HEK293 (cell line): ENCODE measurements at regions of chr17 and their contacts with region 1.

Region 1: GRCh38 chr17:10646392-10646990 is 10.6 kb downstream of the MYH3 start:
- H3K4me3 ChIP-seq: no peak overlapping the region
- H3K27ac ChIP-seq: no peak overlapping the region
- H3K4me1 ChIP-seq: no peaks in the 10 kb centered on the region
- CTCF ChIP-seq: 0 out of 2 replicates have a peak, but pooled peaks have one; percentile 41

Region 2: GRCh38 chr17:10574324-10574723 is 72.2 kb before region 1 on chr17:
- CTCF ChIA-PET with region 1: no interaction called
- POLR2A ChIA-PET with region 1: no interaction called
- H3K4me3 ChIP-seq: no peak overlapping the region
- H3K27ac ChIP-seq: no peak overlapping the region
- H3K4me1 ChIP-seq: no peaks in the 10 kb centered on the region
- CTCF ChIP-seq: no peak

Region 3: GRCh38 chr17:10631048-10631700 is 15.3 kb before region 1 on chr17:
- CTCF ChIA-PET with region 1: interaction called, 135 read pairs
- POLR2A ChIA-PET with region 1: no interaction called
- H3K4me3 ChIP-seq: no peak overlapping the region
- H3K27ac ChIP-seq: no peak overlapping the region
- H3K4me1 ChIP-seq: no peaks in the 10 kb centered on the region
- CTCF ChIP-seq: peak; percentile 49

Region 4: DNA sequence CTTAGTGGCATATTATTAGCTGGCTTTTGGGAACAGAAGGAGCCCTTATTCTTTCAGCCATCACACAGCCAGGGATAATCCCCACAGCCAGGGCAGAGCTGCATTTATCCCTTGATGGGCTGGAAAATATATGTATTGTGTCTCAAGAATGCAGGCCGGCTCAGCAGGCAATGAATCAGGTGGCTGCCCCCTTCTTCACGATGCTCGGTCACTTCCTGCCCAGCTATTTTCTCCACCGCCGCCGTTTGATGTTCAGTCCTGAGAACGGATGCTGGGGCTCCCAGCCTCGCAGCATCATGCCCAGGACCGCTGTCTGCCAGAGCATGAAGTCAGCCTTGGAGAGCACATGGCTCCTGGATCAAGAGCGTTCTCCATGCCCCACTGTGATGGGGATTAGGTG is 14.9 kb after region 1 on chr17:
- CTCF ChIA-PET with region 1: interaction called, 36 read pairs
- POLR2A ChIA-PET with region 1: no interaction called
- H3K4me3 ChIP-seq: no peak overlapping the region
- H3K27ac ChIP-seq: no peak overlapping the region
- H3K4me1 ChIP-seq: no peaks in the 10 kb centered on the region
- CTCF ChIP-seq: no peak

Region 5: DNA sequence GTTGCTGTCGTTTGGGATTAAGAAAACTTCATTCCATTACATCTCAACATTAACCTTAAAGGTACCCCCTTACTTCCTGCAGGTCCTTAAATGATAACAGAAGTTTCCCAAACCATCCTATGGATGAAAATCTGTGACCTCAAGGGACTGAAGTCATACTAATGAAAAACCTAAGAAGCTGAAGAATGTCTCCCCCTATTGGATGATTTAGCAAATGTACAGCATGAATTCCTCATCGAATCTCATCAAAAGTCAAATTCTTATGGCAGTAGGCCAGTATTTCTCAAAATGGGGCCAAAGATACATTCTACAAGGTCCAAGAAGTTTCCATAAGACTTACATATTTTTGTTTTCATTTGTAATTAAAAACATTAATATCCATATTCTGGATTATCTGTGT is 37.4 kb after region 1 on chr17:
- CTCF ChIA-PET with region 1: interaction called, 50 read pairs
- POLR2A ChIA-PET with region 1: no interaction called
- H3K4me3 ChIP-seq: no peak overlapping the region
- H3K27ac ChIP-seq: no peak overlapping the region
- H3K4me1 ChIP-seq: no peaks in the 10 kb centered on the region
- CTCF ChIP-seq: no peak

Region 6: GRCh38 chr17:10697092-10698081 is 50.9 kb after region 1 on chr17 and contains the starts of genes ADPRM and SCO1:
- CTCF ChIA-PET with region 1: interaction called, 16 read pairs
- POLR2A ChIA-PET with region 1: no interaction called
- H3K4me3 ChIP-seq: peak within 1 kb of the TSS; percentile 78
- H3K27ac ChIP-seq: peak within 1 kb of the TSS; percentile 81
- H3K4me1 ChIP-seq: peaks cover 6% of the 10 kb centered on the region
- CTCF ChIP-seq: peak; percentile 88; the same call in 1 of the 2 replicates

Region 7: DNA sequence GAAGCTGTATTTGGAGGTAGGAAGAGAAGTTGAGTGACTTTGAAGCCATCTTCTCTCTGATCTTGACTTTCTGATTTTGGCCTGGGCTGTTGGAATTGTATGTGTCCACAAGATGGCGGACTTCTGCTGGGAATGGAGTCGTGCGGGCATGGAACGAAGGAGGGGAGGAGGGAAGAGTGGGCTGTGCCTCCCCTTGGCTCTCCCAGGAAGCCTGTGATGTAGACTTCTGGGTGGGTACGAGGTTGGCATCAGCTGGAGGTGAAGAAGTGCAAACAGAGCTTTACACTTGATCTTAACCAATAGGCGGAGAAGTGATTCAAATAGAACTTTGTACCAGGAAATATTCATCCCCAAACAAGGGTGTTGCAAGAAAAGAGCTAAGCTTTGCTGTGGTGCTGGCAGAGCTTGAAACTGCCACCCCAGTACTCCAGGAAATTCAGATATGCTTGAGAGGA is 90.7 kb after region 1 on chr17:
- CTCF ChIA-PET with region 1: interaction called, 19 read pairs
- POLR2A ChIA-PET with region 1: no interaction called
- H3K4me3 ChIP-seq: no peak overlapping the region
- H3K27ac ChIP-seq: no peak overlapping the region
- H3K4me1 ChIP-seq: no peaks in the 10 kb centered on the region
- CTCF ChIP-seq: peak; percentile 85

Region 8: DNA sequence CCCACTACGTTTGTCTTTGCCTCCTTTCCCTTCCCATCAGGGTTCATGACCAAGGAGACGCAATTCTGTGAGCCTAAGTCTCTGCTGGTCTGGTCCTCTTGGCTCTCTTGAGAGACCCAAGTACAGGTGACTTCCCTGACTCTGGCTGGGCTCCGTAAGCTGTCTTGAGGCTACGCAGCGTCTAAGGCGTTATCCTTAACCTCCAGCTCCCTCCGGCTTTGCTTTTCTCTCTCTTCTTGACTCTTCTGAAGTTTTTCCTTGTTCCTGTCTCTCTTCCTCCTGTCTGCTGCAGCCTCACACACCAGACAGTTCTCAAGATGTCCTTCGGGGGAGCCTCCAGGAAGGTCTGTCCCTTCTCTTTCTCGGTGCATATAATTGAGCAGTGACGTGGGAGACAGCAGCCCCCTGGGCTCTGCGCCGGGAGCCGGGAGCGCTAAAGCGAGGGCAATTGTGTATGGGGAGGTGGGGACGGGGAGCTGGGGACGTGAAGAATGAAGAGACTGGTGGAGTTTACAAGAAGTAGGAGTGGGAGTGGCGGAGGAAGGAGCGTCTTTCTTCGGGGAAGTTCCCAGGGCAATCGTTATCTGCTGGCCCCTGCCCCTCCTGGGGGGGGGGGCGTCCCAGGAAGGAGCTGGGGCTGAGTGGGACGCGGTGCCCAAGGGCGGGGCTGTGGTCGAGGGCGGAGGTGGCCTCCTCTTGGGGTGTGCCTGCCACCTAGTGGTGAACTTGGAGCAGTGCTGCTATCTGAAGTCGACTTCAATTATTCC is 198.3 kb after region 1 on chr17:
- CTCF ChIA-PET with region 1: interaction called, 35 read pairs
- POLR2A ChIA-PET with region 1: no interaction called
- H3K4me3 ChIP-seq: peak overlapping the region; percentile 41
- H3K27ac ChIP-seq: no peak overlapping the region
- H3K4me1 ChIP-seq: peaks cover 2% of the 10 kb centered on the region; the same call in 1 of the 2 replicates
- CTCF ChIP-seq: peak; percentile 84